Left colon (tissue), 2 donors: ENCODE measurements at regions of chr9 and their contacts with region 1.

Region 1: GRCh38 chr9:70111042-70111602 is 67.5 kb downstream of the MAMDC2 start:
- DNase-seq: peak; percentile 74 to 80
- ATAC-seq: peak; percentile 67

Region 2: GRCh38 chr9:69905291-69905690 is 205.8 kb before region 1 on chr9:
- intact Hi-C with region 1: no loop called
- DNase-seq: no peak
- ATAC-seq: no peak

Region 3: DNA sequence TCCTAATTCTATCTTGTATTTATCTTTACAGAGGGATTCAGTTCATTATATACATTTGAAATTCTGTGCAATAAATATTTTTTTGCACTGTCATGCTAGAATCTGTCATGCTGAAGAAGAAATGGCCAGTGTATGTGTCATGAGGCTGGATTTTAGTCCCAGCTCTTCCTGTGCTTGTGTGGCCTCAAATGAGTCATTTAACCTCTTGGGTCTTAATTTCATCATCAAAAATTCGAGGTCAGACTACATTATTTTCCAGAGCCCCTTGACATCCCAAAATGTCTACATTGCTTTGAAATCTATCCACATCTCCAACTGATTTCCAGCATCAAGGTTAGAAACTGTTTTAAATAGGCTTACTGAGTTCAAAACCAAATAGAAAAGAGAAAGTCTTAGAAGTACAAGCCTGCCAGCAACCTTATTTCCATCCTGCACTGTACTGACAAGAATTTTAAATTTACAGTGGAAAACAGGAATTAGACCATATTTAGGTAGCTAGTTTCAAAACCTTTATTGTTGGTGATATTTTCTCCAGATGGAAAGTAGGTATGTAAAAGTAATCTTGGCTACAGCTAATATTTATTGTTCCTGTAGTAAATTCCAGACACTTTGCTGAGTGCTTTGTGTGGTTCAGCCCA is 164.2 kb before region 1 on chr9:
- intact Hi-C with region 1: no loop called
- DNase-seq: no peak
- ATAC-seq: no peak

Region 4: DNA sequence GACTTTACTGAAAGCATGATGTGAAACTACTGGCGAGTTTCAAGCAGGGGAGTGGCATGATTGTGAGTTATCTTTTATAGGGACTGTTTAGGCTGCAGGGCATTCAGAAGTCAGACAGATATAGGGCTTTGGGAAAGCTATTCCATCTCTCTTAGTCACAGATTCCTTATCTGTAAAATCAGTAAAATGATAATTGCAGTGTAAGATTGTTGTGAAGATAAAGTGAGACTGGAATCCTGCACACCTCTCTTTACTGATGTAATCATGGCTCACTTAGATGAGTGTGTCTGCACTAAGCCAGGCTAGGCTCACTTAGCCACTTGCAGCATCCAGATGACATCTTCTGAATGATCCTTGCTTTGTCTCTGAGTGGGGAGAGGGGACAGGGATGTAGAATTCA is 149.3 kb before region 1 on chr9:
- intact Hi-C with region 1: loop called in 1 of 2 experiments (anchors 10 kb)
- DNase-seq: no peak
- ATAC-seq: no peak

Region 5: GRCh38 chr9:69971643-69972449 is 139.3 kb before region 1 on chr9:
- intact Hi-C with region 1: loop called (anchors 2 to 10 kb)
- DNase-seq: peak; percentile 46 to 69
- ATAC-seq: peak; percentile 45

Region 6: GRCh38 chr9:70043689-70044489 is 67.2 kb before region 1 on chr9 and contains the start of gene MAMDC2:
- intact Hi-C with region 1: loop called in 1 of 2 experiments (anchors 10 kb)
- DNase-seq: peak; percentile 23 to 40
- ATAC-seq: peak; percentile 22
- total RNA-seq, gene MAMDC2: 4.6 to 12.7 TPM